ENCODE measurements at regions of chr15 and their contacts with region 1.

Region 1: DNA sequence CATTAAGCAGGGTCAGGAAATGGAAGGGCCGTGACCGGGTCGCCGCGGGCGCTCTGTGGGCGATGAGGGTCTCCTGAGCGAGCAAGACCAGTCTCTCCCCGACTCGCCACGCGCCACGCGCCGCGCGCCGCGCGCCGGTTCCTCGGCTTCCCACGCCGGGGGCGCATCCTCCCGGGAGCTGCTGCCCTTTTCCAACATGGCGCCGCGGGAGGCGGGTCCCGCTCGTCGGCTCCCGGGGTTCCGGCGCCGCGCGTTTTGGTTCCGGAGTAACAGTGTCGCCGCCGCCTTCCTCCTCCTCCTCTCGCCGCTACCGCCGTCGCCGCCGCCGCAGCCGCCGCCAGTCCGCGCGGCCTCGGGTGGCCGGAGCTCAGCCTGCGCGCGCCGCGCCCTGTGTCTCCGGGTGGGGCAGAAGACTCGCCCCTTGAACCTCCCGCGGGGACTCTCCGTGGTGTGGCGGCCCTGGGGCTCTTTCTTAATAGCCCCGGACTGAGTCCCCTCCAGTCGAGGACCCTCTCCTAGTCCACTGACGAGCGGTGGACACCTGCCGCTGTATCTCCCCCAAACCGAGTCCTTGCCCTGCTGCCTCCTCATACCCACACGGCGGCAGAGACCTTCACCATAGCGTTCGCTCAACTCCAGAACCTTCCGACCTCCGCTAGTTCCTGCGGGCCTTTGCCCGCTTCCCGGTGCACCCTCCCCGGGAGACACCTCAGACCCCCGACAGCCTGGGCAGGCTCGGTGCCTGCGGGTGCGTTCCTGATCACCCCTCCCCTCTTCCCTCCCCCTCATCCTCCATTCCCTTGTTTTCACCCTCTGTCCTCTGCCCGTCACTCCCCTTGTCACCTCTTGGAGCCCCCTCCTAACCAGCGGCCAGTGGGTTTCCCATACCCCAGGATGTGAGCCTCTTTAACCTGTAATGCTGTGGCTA is at the start of gene MAP2K5:
- DNase-seq: peak; percentile 57
- ATAC-seq: peak; percentile 97
- H3K4me3 ChIP-seq: peak within 1 kb of the TSS; percentile 88
- H3K27ac ChIP-seq: peak within 1 kb of the TSS; percentile 71
- H3K4me1 ChIP-seq: peaks cover 9% of the 10 kb centered on the region
- H3K27me3 ChIP-seq: no peaks in the 10 kb centered on the region
- CTCF ChIP-seq: no peak
- POLR2A ChIP-seq: no peak
- RAD21 ChIP-seq: no peak
- total RNA-seq, gene MAP2K5: 1.6 and 2.8 TPM in 2 replicates

Region 2: DNA sequence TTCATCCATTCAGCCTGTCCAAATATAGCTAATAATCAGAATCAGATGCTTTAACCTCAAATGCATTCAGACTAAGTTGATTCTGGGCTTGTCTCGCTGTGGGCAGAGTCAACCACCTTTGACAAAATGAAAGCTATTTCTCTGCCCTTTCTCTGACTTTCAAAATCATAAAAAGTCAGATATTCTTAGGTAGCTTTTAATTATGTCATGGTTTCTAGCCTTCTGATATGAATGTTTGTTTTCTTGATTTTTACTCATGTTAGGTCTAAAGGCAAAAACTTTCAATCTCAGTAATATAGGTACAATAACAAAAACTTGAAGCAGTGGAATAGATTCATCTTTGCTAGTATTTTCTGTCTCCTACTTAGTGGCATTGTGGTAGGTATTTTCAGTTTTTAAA is 47.1 kb before region 1 on chr15:
- CTCF ChIA-PET with region 1: no interaction called
- POLR2A ChIA-PET with region 1: no interaction called
- dilution Hi-C with region 1: no loop called
- in situ Hi-C with region 1: no loop called
- intact Hi-C with region 1: no loop called
- DNase-seq: no peak
- ATAC-seq: no peak
- H3K4me3 ChIP-seq: no peak overlapping the region
- H3K27ac ChIP-seq: no peak overlapping the region
- H3K4me1 ChIP-seq: no peaks in the 10 kb centered on the region
- H3K27me3 ChIP-seq: peaks cover 3% of the 10 kb centered on the region
- CTCF ChIP-seq: no peak
- POLR2A ChIP-seq: no peak
- RAD21 ChIP-seq: no peak

Region 3: DNA sequence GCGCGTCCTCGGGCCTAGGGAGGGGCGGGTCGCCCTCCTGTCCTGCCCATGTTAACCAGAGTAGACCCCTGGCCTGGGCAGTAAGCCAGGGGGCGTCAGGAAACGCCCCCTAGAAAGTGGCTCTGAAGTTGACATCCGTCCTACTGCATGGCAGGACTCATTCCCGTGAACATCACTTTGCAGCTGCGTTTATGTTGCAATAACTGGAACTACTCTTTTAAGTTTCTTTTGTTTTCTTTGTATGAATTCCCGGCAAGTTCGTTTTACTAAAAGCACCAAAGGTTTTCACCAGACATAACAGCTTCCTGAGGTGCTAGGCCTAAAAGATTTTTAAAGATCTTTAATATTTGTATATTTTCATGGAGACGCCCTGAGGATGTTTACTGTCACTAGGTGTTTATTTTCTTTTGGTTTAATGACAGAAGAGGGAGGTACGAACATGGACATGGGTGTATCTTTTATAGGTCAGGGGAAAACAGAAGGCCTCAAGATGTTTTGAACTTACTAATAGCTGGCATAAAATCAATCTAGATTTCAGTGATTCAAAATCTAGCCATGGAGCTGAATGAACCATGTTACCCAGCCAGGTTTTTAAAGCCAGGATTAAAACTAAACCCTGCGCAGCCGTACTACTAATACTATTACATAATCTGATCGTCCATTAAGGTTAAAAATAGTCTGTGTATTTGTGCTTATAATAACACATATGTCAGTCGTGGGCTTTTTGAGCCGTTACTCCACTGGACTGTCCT is 20.7 kb before region 1 on chr15:
- CTCF ChIA-PET with region 1: no interaction called
- POLR2A ChIA-PET with region 1: no interaction called
- dilution Hi-C with region 1: no loop called
- in situ Hi-C with region 1: no loop called
- intact Hi-C with region 1: loop called (anchors 2 kb)
- DNase-seq: peak; percentile 51
- ATAC-seq: peak; percentile 4
- H3K4me3 ChIP-seq: peak overlapping the region; percentile 79
- H3K27ac ChIP-seq: peak overlapping the region; percentile 94
- H3K4me1 ChIP-seq: no peaks in the 10 kb centered on the region
- H3K27me3 ChIP-seq: no peaks in the 10 kb centered on the region
- CTCF ChIP-seq: no peak
- POLR2A ChIP-seq: no peak
- RAD21 ChIP-seq: no peak

Region 4: DNA sequence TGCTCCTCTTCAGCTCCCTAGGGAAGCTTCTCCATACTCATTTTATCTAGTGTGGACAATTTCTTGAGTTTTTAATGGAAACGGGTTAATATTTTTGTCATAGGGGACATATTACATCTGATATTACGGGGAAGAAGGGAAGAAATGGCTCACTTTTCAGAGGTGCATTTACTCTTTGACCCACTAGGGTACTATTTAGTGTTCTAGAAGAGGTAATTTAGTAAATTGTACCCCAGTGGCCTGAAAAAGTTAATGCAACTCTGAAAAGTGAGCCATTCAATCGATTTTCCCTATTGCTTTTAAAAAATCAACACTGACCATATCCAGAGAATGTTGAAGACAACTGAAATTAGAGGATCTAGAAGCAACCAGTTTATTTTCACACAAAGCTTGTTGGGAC is 71.0 kb after region 1 on chr15:
- CTCF ChIA-PET with region 1: no interaction called
- POLR2A ChIA-PET with region 1: interaction called, 10 read pairs
- dilution Hi-C with region 1: no loop called
- in situ Hi-C with region 1: no loop called
- intact Hi-C with region 1: no loop called
- DNase-seq: no peak
- ATAC-seq: no peak
- H3K4me3 ChIP-seq: no peak overlapping the region
- H3K27ac ChIP-seq: no peak overlapping the region
- H3K4me1 ChIP-seq: peaks cover 7% of the 10 kb centered on the region; the same call in 1 of the 2 replicates
- H3K27me3 ChIP-seq: no peaks in the 10 kb centered on the region
- CTCF ChIP-seq: no peak
- POLR2A ChIP-seq: no peak
- RAD21 ChIP-seq: no peak

Measured in IMR-90 (cell line).